ENCODE measurements at regions of chr11 and their contacts with region 1.

Region 1: GRCh38 chr11:11036848-11037732 is 179.2 kb upstream of the ZBED5 start:
- DNase-seq: peak; percentile 42
- ATAC-seq: peak; percentile 74
- H3K4me3 Mint-ChIP-seq: no peak overlapping the region
- H3K27ac Mint-ChIP-seq: no peak overlapping the region
- H3K4me1 Mint-ChIP-seq: peaks cover 10% of the 10 kb centered on the region
- H3K27me3 Mint-ChIP-seq: no peaks in the 10 kb centered on the region

Region 2: DNA sequence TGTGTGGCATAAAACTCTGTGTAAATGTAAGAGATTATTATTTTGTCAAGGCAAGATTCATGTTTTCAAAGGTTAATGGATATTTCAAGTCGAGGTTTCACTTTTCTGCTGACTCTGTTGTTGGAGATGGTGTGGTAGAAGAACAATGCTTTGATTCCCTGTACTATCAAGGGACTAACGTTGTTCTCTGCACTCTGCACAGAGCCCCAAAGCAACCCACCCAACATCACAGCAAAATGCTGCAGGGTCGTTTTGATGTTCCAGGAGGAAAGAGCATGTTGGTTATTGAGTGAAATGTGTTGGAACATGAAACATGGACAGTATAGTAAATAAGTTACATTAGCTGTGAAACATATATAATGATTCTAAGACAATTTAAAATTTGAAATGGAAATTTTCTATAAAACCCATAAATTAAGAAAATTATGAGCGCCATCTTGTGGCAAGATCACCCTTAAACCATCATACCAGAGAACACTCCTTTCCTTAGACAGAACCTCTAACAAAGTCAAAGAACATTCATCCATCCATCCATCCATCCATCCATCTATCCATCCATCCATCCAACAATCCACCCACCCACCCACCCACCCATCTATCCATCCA is 14.9 kb before region 1 on chr11:
- CTCF ChIA-PET with region 1: interaction called, 53 read pairs
- POLR2A ChIA-PET with region 1: no interaction called
- intact Hi-C with region 1: no loop called
- DNase-seq: peak; percentile 27
- ATAC-seq: no peak
- H3K4me3 Mint-ChIP-seq: no peak overlapping the region
- H3K27ac Mint-ChIP-seq: no peak overlapping the region
- H3K4me1 Mint-ChIP-seq: no peaks in the 10 kb centered on the region
- H3K27me3 Mint-ChIP-seq: no peaks in the 10 kb centered on the region

Region 3: GRCh38 chr11:11157185-11157584 is 120.1 kb after region 1 on chr11:
- CTCF ChIA-PET with region 1: interaction called, 18 read pairs
- POLR2A ChIA-PET with region 1: no interaction called
- intact Hi-C with region 1: loop called (anchors 1 to 2 kb)
- DNase-seq: peak; percentile 69
- ATAC-seq: peak; percentile 42
- H3K4me3 Mint-ChIP-seq: no peak overlapping the region
- H3K27ac Mint-ChIP-seq: peak overlapping the region; percentile 76
- H3K4me1 Mint-ChIP-seq: peaks cover 26% of the 10 kb centered on the region
- H3K27me3 Mint-ChIP-seq: no peaks in the 10 kb centered on the region

Region 4: GRCh38 chr11:11192541-11192940 is 155.5 kb after region 1 on chr11:
- CTCF ChIA-PET with region 1: no interaction called
- POLR2A ChIA-PET with region 1: no interaction called
- intact Hi-C with region 1: no loop called
- DNase-seq: no peak
- ATAC-seq: no peak
- H3K4me3 Mint-ChIP-seq: no peak overlapping the region
- H3K27ac Mint-ChIP-seq: no peak overlapping the region
- H3K4me1 Mint-ChIP-seq: no peaks in the 10 kb centered on the region
- H3K27me3 Mint-ChIP-seq: peaks cover 2% of the 10 kb centered on the region

Region 5: DNA sequence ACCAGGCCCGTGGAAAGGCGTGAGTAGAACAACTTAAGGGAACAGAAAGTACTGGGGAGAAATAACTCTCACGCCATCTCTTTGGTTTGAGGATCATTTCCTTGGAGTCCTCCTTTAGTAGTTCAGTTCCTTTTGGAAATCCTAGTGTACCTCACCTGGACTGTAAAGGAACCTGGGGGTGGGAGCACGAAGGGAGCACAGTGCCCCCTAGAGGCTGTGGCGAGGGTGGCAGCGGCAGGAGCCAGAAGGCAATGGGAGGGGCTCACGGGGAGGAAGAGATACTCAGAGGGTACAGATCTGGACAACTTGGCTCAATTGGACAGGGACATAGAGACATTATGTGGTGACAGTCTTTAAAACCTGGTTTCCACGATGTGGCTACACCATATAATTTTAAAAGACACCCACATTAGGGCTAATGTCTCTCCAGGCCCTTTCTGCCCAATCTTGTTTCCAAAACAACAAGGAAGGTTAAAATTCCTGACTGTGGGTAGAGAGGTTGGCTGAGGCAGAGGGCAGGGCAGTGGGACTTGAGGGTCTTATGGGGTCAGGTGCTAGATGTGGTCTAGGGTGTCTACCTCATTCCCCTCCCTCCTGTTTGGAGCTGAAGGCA is 229.0 kb after region 1 on chr11:
- CTCF ChIA-PET with region 1: interaction called, 7 read pairs
- POLR2A ChIA-PET with region 1: no interaction called
- intact Hi-C with region 1: loop called (anchors 1 to 2 kb)
- DNase-seq: peak; percentile 83
- ATAC-seq: peak; percentile 68
- H3K4me3 Mint-ChIP-seq: no peak overlapping the region
- H3K27ac Mint-ChIP-seq: no peak overlapping the region
- H3K4me1 Mint-ChIP-seq: no peaks in the 10 kb centered on the region
- H3K27me3 Mint-ChIP-seq: peaks cover 2% of the 10 kb centered on the region

Region 6: DNA sequence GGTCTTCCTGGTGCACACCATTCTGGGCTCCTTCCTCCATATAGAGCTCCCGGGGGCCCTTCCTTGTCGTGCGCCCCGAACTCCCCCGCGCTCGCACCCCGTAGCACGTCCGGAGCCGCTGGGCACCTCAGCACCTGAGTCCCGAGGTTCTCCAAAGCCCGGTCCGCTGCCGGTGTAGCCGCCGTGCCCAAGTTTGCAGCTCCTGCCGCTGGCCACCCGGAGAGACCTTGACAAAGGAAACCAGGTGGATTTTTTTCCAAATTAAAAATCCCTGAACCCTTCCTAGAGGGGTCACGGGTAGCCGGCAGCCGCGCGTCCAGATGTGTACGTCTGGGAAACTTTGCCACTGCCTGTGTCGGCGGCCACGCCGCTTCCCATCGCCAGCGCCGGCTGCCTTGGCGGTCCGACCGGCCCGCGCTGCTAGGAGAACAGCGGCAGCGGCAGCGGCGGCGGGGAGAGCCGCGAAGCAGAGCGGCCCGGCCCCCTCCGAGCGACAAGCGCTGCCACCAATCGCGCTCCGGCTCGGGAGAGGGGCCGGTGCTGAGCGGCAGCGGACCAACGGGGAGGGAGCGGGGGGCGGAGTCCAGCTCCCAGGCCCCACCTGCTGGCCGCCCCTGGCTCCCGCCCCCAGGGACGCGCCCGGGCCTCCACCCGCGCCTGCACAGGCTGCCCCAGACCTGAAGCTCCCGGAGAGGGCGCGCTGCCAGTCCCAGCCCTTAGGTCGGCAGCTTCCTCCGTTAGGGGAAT is 584.7 kb after region 1 on chr11 and contains the start of gene GALNT18:
- CTCF ChIA-PET with region 1: no interaction called
- POLR2A ChIA-PET with region 1: no interaction called
- intact Hi-C with region 1: loop called in 1 of 2 experiments (anchors 5 kb)
- DNase-seq: peak; percentile 94
- ATAC-seq: peak; percentile 99
- H3K4me3 Mint-ChIP-seq: peak within 1 kb of the TSS; percentile 80
- H3K27ac Mint-ChIP-seq: peak within 1 kb of the TSS; percentile 63
- H3K4me1 Mint-ChIP-seq: peaks cover 5% of the 10 kb centered on the region
- H3K27me3 Mint-ChIP-seq: peaks cover 37% of the 10 kb centered on the region
- total RNA-seq, gene GALNT18: 6.9 to 8.8 TPM

Region 7: DNA sequence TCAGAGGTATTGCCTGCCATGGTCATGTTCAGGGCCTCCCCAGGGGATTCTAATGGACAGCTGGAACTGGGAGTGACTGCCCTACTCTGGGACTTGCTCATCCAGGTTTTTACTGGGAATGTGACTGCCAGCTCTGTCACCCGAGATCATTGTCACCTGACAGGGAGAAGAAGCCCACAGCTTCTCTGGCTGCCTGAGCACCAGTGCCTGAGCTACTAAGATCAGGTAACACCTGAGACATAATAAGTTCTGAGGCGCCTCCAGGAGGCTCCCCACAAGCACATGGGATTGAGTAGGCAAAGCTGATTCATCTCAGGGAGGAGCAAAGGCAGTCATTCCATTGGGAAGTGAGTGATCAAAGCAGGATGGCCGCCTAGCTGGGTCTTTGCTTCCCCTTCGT is 668.9 kb after region 1 on chr11:
- CTCF ChIA-PET with region 1: no interaction called
- POLR2A ChIA-PET with region 1: no interaction called
- intact Hi-C with region 1: no loop called
- DNase-seq: no peak
- ATAC-seq: no peak
- H3K4me3 Mint-ChIP-seq: no peak overlapping the region
- H3K27ac Mint-ChIP-seq: no peak overlapping the region
- H3K4me1 Mint-ChIP-seq: no peaks in the 10 kb centered on the region
- H3K27me3 Mint-ChIP-seq: peaks cover 6% of the 10 kb centered on the region

Measured in activated CD4-positive, alpha-beta T cell treated with anti-CD3 and anti-CD28 coated beads for 36 hours (primary cell).